ENCODE measurements at regions of chr6 and their contacts with region 1.

Region 1: GRCh38 chr6:120010075-120010474 is 660.5 kb upstream of the MAN1A1 start:
- H3K4me3 Mint-ChIP-seq: no peak overlapping the region
- H3K27ac Mint-ChIP-seq: no peak overlapping the region
- H3K4me1 Mint-ChIP-seq: no peaks in the 10 kb centered on the region
- H3K27me3 Mint-ChIP-seq: no peaks in the 10 kb centered on the region

Region 2: GRCh38 chr6:119768201-119768600 is 241.9 kb before region 1 on chr6:
- intact Hi-C with region 1: loop called (anchors 10 kb)
- H3K4me3 Mint-ChIP-seq: no peak overlapping the region
- H3K27ac Mint-ChIP-seq: no peak overlapping the region
- H3K4me1 Mint-ChIP-seq: peaks cover 9% of the 10 kb centered on the region
- H3K27me3 Mint-ChIP-seq: no peaks in the 10 kb centered on the region